CD4-positive, alpha-beta memory T cell (primary cell): ENCODE measurements at regions of chr10 and their contacts with region 1.

Region 1: DNA sequence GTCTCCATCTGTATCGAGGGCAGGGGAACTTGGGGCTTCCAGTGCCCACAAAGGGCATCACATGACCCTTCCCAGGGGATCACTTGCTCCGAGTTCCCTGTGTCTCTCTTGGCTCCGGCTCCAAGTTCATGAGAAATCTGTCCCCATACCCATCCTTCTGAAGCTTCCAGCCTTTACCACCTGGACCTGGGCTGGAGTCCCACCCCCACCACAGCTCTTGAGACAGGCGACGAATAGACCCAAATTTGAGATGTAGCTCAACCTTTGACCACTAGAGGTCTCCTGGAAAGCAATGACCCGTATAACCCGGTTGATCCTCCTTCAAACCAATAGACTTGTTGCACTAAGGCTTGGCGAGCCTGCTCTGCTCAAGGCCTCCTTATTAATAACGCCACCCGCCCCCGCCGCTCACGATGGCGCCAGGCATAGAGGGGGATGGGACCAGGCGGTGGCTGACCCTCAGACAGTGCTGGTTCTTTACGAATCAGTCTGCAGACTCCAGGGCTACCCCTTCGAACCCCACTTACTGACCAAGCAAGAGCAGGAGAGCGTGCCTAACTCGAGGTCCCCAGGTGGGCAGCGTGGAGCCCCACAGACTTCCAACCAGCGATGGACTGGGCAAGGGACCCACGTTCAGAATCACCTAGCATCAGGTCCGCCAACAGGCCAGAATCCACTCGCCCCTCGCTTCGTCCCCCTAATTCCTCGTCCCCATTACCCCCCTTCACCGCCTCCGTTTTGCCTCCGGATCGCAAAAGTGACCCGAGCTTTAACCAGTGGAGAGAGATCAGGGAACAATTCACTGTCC is 4.4 kb upstream of the ARID5B start:
- DNase-seq: peak; percentile 71 to 78 (median 74)
- H3K4me3 ChIP-seq: peak overlapping the region; percentile 7 to 40
- H3K4me3 Mint-ChIP-seq: peak overlapping the region; percentile 67 to 97 (median 84)
- H3K27ac ChIP-seq: no peak overlapping the region
- H3K27ac Mint-ChIP-seq: peak overlapping the region; percentile 13 to 94 (median 92)
- H3K4me1 ChIP-seq: peaks cover 31% of the 10 kb centered on the region
- H3K4me1 Mint-ChIP-seq: peaks cover 18 to 41% (median 26%) of the 10 kb centered on the region in 4 donors
- H3K27me3 ChIP-seq: no peaks in the 10 kb centered on the region
- H3K27me3 Mint-ChIP-seq: no peaks in the 10 kb centered on the region

Region 2: GRCh38 chr10:61837760-61838171 is 59.3 kb before region 1 on chr10:
- CTCF ChIA-PET with region 1: no interaction called
- POLR2A ChIA-PET with region 1: no interaction called
- intact Hi-C with region 1: no loop called
- DNase-seq: no peak
- H3K4me3 ChIP-seq: no peak overlapping the region
- H3K4me3 Mint-ChIP-seq: no peak overlapping the region
- H3K27ac ChIP-seq: no peak overlapping the region
- H3K27ac Mint-ChIP-seq: no peak overlapping the region
- H3K4me1 ChIP-seq: peaks cover 15% of the 10 kb centered on the region
- H3K4me1 Mint-ChIP-seq: peaks cover 4 to 14% (median 12%) of the 10 kb centered on the region in 4 donors
- H3K27me3 ChIP-seq: no peaks in the 10 kb centered on the region
- H3K27me3 Mint-ChIP-seq: peaks cover 0 to 2% of the 10 kb centered on the region in 2 donors

Region 3: GRCh38 chr10:61869774-61870525 is 27.1 kb before region 1 on chr10:
- CTCF ChIA-PET with region 1: interaction called, 25 read pairs
- POLR2A ChIA-PET with region 1: interaction called, 21 read pairs
- intact Hi-C with region 1: loop called (anchors 1 kb)
- DNase-seq: no peak
- H3K4me3 ChIP-seq: no peak overlapping the region
- H3K4me3 Mint-ChIP-seq: peak overlapping the region in 1 of 8 donors; percentile 28
- H3K27ac ChIP-seq: no peak overlapping the region
- H3K27ac Mint-ChIP-seq: no peak overlapping the region
- H3K4me1 ChIP-seq: peaks cover 4% of the 10 kb centered on the region
- H3K4me1 Mint-ChIP-seq: peaks cover 0 to 9% (median 3%) of the 10 kb centered on the region in 4 donors
- H3K27me3 ChIP-seq: no peaks in the 10 kb centered on the region
- H3K27me3 Mint-ChIP-seq: no peaks in the 10 kb centered on the region

Region 4: DNA sequence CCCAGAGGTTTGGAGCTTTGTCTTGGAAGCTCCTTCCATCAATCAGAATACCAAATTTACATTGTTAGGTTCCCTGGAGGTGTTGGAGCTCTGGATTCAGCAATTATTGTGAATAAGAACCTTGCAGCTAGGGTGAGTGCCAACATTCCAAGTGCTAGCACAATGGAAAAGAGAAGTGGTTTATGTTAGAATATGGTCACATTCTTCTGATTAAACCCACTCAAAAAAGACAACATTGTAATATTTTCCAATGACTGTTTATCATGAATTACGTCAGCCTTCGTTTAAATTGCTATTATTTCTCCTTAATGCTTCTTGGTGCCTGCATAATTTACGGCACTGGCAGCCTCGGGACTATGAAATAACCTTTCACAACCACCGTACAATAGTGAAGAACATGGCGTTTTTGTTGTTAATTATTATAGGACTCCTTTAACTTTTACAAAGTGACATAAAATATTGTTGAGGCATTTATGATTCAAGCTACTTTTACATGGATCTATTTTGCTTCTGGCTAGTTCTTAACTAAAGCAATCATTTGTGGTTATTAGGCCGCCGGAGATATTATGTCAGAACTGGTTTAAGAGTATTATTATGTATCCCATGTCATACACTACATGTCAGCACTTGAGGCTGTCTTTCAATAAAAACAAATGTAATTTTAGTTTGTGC is 122.1 kb after region 1 on chr10:
- CTCF ChIA-PET with region 1: interaction called, 8 read pairs
- POLR2A ChIA-PET with region 1: interaction called, 15 read pairs
- intact Hi-C with region 1: no loop called
- DNase-seq: no peak
- H3K4me3 ChIP-seq: no peak overlapping the region
- H3K4me3 Mint-ChIP-seq: peak overlapping the region in 4 of 8 donors; percentile 0 to 66 (median 27)
- H3K27ac ChIP-seq: no peak overlapping the region
- H3K27ac Mint-ChIP-seq: peak overlapping the region in 5 of 7 donors; percentile 3 to 87 (median 68)
- H3K4me1 ChIP-seq: peaks cover 67% of the 10 kb centered on the region
- H3K4me1 Mint-ChIP-seq: peaks cover 49 to 82% (median 67%) of the 10 kb centered on the region in 4 donors
- H3K27me3 ChIP-seq: no peaks in the 10 kb centered on the region
- H3K27me3 Mint-ChIP-seq: no peaks in the 10 kb centered on the region

Region 5: DNA sequence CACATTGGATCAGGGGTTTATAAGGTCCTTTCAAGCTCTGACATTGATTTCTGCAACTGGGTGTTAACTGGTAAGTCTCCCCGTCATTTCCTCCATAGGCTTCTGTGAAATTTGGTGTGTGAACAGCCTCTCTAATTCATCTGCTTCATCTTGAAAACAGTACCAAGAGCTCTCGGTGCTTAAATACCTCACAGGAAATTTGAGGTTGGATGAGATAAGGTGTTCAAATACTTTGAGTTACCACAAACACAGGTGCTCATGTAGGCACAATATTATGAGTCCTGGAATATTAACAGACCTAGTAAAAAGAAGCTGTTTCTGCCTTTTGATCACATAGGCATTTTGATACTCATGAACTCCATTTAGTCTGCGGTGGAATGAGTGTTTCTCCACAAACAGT is 286.4 kb after region 1 on chr10:
- CTCF ChIA-PET with region 1: interaction called, 3 read pairs
- POLR2A ChIA-PET with region 1: interaction called, 58 read pairs
- intact Hi-C with region 1: loop called (anchors 1 kb)
- DNase-seq: peak; percentile 81 to 92 (median 88)
- H3K4me3 ChIP-seq: no peak overlapping the region
- H3K4me3 Mint-ChIP-seq: peak overlapping the region in 7 of 8 donors; percentile 24 to 65 (median 51)
- H3K27ac ChIP-seq: peak overlapping the region; percentile 42
- H3K27ac Mint-ChIP-seq: peak overlapping the region; percentile 83 to 95 (median 92)
- H3K4me1 ChIP-seq: peaks cover 71% of the 10 kb centered on the region
- H3K4me1 Mint-ChIP-seq: peaks cover 57 to 84% (median 77%) of the 10 kb centered on the region in 4 donors
- H3K27me3 ChIP-seq: no peaks in the 10 kb centered on the region
- H3K27me3 Mint-ChIP-seq: no peaks in the 10 kb centered on the region

Region 6: GRCh38 chr10:62422068-62422590 is 525.1 kb after region 1 on chr10:
- CTCF ChIA-PET with region 1: no interaction called
- POLR2A ChIA-PET with region 1: no interaction called
- intact Hi-C with region 1: loop called (anchors 10 kb)
- DNase-seq: no peak
- H3K4me3 ChIP-seq: no peak overlapping the region
- H3K4me3 Mint-ChIP-seq: no peak overlapping the region
- H3K27ac ChIP-seq: no peak overlapping the region
- H3K27ac Mint-ChIP-seq: no peak overlapping the region
- H3K4me1 ChIP-seq: no peaks in the 10 kb centered on the region
- H3K4me1 Mint-ChIP-seq: no peaks in the 10 kb centered on the region
- H3K27me3 ChIP-seq: no peaks in the 10 kb centered on the region
- H3K27me3 Mint-ChIP-seq: peaks cover 0 to 3% of the 10 kb centered on the region in 2 donors